ENCODE measurements at regions of chr21 and their contacts with region 1.

Region 1: GRCh38 chr21:36060159-36060921 is at the start of gene SETD4:
- DNase-seq: peak; percentile 96 to 98
- ATAC-seq: peak; percentile 98
- H3K4me3 ChIP-seq: peak within 1 kb of the TSS; percentile 38 to 72
- H3K27ac ChIP-seq: peak within 1 kb of the TSS in 1 of 2 donors; percentile 75
- H3K4me1 ChIP-seq: no peaks in the 10 kb centered on the region
- H3K27me3 ChIP-seq: no peaks in the 10 kb centered on the region
- total RNA-seq, gene SETD4: 14.8 to 22.5 TPM

Region 2: DNA sequence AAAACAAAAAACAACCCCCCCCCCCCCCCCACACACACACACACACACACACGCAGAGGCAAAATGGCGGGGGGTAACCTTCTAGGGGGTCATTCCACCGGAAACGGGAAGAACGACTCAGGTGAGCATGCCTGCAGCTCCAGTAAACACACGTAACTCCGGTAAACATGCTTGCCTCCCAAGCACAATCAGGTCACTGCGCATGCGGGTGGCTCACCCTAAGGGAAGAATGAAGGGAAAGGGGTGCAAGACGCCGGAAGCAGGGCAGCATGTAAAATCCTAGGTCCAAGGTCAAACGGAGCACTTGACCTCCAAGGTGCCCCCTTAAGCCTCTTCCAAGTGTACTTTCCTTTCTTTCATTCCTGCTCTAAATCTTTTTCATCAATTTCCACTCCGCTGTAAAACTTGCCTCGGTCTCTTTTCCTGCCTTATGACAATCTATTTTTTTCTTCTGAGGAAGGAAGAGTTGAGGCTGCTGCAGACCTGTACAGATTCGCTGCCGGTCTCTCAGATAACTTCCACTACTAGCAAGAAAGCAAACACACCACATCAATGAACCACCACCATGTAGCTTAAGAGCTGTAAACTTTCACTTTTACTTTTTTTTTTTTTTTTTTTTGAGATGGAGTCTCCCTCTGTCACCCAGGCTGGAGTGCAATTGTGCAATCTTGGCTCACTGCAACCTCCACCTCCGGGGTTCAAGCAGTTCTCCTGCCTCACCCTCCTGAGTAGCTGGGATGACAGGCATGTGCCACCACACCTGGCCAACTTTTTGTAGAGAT is 53.5 kb after region 1 on chr21:
- intact Hi-C with region 1: loop called in 1 of 2 experiments (anchors 5 kb)
- DNase-seq: no peak
- ATAC-seq: no peak
- H3K4me3 ChIP-seq: no peak overlapping the region
- H3K27ac ChIP-seq: no peak overlapping the region
- H3K4me1 ChIP-seq: no peaks in the 10 kb centered on the region
- H3K27me3 ChIP-seq: no peaks in the 10 kb centered on the region